ENCODE measurements at regions of chr22 and their contacts with region 1.

Region 1: DNA sequence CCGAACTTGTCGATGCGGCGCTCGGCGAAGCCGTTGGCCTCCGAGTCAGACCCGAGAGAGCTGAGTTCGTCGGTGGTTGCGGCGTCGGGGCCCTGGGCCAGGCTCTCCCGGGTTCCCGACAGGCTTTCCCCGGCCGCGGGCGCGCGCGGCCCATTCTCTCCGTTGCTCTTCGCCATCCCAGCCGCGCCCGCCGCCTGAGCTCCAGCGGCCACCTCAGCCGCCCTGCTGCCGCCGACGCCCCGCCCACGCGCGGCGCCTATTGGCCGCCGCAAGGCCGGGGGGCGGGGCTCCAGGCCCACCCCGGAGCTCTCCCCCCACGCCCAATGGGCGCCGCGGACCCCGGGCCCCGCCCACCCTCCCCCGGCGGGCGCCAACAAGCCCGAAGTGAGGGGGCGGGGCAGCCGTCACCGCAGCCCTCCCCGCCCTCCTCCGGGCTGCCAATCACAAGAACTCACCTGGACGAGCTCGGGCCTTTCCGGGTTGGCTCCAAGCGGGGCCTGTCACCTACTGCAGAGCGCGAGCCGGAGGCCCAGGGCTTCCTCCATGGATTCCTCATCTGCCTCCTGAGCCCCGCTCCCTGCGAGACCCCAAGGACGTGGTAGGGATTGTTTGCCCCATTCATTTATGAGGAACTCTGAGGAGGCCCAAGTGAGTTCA is at the start of gene TBC1D10A:
- DNase-seq: peak; percentile 80 to 95
- H3K4me3 ChIP-seq: peak within 1 kb of the TSS; percentile 95 to 100
- H3K27ac ChIP-seq: peak within 1 kb of the TSS; percentile 94 to 95
- H3K4me1 ChIP-seq: peaks cover 10 to 39% of the 10 kb centered on the region in 2 donors
- H3K27me3 ChIP-seq: no peaks in the 10 kb centered on the region
- CTCF ChIP-seq: no peak
- total RNA-seq, gene TBC1D10A: 107 TPM

Region 2: GRCh38 chr22:30305519-30305905 is 21.3 kb before region 1 on chr22:
- intact Hi-C with region 1: loop called (anchors 1 kb)
- DNase-seq: peak in 1 of 2 donors; percentile 83
- H3K4me3 ChIP-seq: peak overlapping the region; percentile 25 to 29
- H3K27ac ChIP-seq: peak overlapping the region; percentile 86
- H3K4me1 ChIP-seq: peaks cover 50 to 93% of the 10 kb centered on the region in 2 donors
- H3K27me3 ChIP-seq: no peaks in the 10 kb centered on the region
- CTCF ChIP-seq: no peak

Region 3: GRCh38 chr22:30356449-30357235 is 29.8 kb after region 1 on chr22 and contains the starts of genes CCDC157 and SF3A1:
- intact Hi-C with region 1: loop called (anchors 1 kb)
- DNase-seq: peak; percentile 39 to 92
- H3K4me3 ChIP-seq: peak within 1 kb of the TSS; percentile 75 to 97
- H3K27ac ChIP-seq: peak within 1 kb of the TSS; percentile 92 to 99
- H3K4me1 ChIP-seq: peaks cover 11 to 24% of the 10 kb centered on the region in 2 donors
- H3K27me3 ChIP-seq: no peaks in the 10 kb centered on the region
- CTCF ChIP-seq: no peak
- total RNA-seq, gene CCDC157: 7.0 TPM
- total RNA-seq, gene SF3A1: 92.9 TPM

Region 4: DNA sequence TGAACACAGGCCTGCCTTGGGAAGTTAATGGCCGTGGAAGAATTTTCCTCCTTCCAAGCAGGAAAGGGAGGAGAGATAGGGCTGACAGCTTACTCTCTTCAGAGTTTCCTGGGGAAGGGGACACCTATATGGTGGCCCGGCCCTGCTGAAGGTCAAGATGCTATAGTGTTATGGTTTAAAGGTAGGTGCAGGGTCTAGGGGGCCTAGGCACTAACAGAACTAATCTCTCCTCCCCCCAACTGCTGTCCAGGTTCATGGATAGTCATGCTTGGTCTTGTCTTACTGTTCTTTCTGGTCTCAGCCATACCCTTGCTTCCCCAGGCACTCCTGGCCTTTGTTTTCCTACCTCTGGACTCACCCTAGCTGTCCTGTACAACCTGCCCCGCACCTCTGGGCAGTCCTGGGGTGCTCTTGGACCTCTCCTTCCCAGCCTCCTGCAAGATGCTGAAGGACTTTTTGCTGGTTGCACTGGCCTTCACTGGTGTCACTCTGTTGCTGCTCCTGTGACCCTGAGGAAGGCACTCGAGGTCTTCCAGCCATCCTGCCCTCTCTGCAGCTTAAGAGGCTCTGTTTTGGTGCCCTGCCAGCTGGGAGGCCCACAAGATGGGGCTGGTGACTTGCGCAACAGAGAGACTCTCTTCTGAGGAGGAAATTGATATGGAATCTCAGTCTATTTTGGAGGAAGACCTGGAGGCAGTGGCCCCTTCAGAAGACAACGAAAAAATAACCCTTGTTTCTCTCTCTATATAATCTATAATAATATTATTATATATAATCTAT is 127.1 kb after region 1 on chr22:
- intact Hi-C with region 1: no loop called
- DNase-seq: no peak
- H3K4me3 ChIP-seq: no peak overlapping the region
- H3K27ac ChIP-seq: no peak overlapping the region
- H3K4me1 ChIP-seq: no peaks in the 10 kb centered on the region
- H3K27me3 ChIP-seq: no peaks in the 10 kb centered on the region
- CTCF ChIP-seq: no peak

Region 5: GRCh38 chr22:30680991-30681770 is 354.3 kb after region 1 on chr22:
- intact Hi-C with region 1: no loop called
- DNase-seq: no peak
- H3K4me3 ChIP-seq: no peak overlapping the region
- H3K27ac ChIP-seq: no peak overlapping the region
- H3K4me1 ChIP-seq: no peaks in the 10 kb centered on the region
- H3K27me3 ChIP-seq: no peaks in the 10 kb centered on the region
- CTCF ChIP-seq: no peak